HepG2 (cell line): ENCODE measurements at regions of chr17 and their contacts with region 1.

Region 1: DNA sequence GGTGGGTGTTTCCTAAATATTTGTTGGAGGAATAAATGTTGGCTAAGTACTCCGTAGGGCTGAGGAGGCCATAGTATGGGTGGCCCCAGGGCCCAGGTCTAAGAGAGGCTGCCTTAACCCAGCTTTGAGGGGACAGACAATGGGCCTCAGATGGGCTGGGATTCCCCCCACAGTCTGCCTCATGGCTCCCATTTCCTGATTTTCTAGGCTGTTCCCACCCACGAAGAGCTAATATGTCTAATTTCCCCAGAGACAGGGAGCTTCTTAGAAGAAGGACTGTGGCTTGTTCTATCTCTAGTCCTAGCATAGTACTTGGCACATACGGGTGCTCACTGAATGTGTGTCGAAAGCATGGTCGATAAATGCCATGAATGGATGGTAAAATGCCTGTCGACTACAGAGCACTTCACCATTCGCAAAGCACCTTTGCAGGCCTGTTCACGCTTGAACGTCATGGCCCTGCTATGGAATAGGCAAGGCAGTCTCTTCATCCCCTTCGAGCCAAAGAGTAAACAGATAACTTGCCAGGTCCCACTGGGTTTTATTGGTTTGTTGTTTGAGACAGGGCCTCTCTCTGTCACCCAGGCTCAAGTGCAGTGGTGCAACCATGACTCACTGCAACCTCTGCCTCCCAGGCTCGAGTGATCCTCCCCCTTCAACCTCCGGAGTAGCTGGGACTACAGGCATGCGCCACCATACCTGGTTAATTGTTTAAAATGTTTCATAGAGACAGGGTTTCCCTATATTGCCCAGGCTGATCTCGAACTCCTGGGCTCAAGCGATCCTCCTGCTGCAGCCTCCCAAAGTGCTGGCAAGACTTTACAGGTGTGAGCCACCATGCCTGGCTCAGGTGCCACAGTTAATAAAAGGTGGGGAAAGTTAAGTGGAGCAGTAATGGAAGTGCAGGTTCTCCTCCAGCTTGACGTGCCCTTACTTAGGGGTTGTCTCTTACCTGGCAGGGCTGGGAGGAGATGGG is 9.7 kb downstream of the CHAD start:
- DNase-seq: peak; percentile 95
- ATAC-seq: peak; percentile 89
- H3K4me3 ChIP-seq: peak overlapping the region in 1 of 3 experiments; percentile 18; a peak in 1 of 6 replicates
- H3K27ac ChIP-seq: peak overlapping the region; percentile 41
- H3K4me1 ChIP-seq: peaks cover 24% of the 10 kb centered on the region
- H3K27me3 ChIP-seq: no peaks in the 10 kb centered on the region
- CTCF ChIP-seq: peak; percentile 26
- EP300 ChIP-seq: peak; percentile 39 to 57; a peak in 2 of 4 replicates
- POLR2A ChIP-seq: peak; percentile 20 to 31; a peak in 2 of 4 replicates
- RAD21 ChIP-seq: no peak

Region 2: DNA sequence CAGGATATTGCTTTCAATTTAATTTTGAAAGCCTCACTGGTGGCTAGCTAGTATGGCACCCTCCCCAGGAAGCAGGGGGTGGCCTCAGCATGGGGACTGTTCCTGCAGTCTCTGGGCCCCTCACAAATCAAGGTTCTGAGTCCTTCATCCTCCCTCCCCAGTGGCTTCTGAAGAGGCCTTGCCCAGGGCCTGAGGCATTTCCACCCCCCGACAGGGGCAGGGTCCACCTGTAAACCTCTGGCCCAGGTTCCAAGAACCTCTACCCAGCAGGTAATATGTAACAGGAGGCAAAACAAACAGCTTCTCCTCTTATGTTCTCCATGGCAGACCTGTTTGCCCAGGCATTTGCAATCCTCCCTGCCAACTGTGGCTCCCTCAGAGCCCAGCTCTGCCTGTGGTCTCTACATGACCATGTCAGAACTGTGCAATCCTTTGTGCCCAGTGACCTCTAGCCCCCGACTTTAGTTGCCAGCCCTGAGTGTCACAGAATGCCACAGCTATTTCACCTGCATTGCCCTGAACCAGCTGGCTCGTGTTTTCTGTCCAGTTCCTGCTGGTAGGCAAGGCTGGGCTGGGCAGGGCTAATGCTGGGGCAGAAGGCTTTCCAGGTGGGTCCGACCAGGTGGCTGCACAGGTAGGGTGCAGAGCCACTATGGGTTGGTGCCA is 18.7 kb before region 1 on chr17:
- CTCF ChIA-PET with region 1: no interaction called
- POLR2A ChIA-PET with region 1: interaction called, 10 read pairs
- in situ Hi-C with region 1: no loop called
- intact Hi-C with region 1: no loop called
- DNase-seq: peak; percentile 67
- ATAC-seq: peak; percentile 90
- H3K4me3 ChIP-seq: 0 out of 6 replicates have a peak overlapping the region, but pooled peaks of 1 of the 3 experiments have one; percentile 1
- H3K27ac ChIP-seq: peak overlapping the region; percentile 58
- H3K4me1 ChIP-seq: peaks cover 52% of the 10 kb centered on the region
- H3K27me3 ChIP-seq: no peaks in the 10 kb centered on the region
- CTCF ChIP-seq: no peak
- EP300 ChIP-seq: no peak
- POLR2A ChIP-seq: no peak
- RAD21 ChIP-seq: 0 out of 2 replicates have a peak, but pooled peaks have one; percentile 19

Region 3: GRCh38 chr17:50519231-50519760 is 60.3 kb after region 1 on chr17:
- CTCF ChIA-PET with region 1: no interaction called
- POLR2A ChIA-PET with region 1: no interaction called
- in situ Hi-C with region 1: no loop called
- intact Hi-C with region 1: no loop called
- DNase-seq: no peak
- ATAC-seq: 0 out of 3 replicates have a peak, but pooled peaks have one; percentile 2
- H3K4me3 ChIP-seq: no peak overlapping the region; a peak in 1 of 6 replicates
- H3K27ac ChIP-seq: no peak overlapping the region
- H3K4me1 ChIP-seq: peaks cover 55% of the 10 kb centered on the region
- H3K27me3 ChIP-seq: no peaks in the 10 kb centered on the region
- CTCF ChIP-seq: no peak
- EP300 ChIP-seq: no peak
- POLR2A ChIP-seq: no peak
- RAD21 ChIP-seq: no peak